ENCODE measurements at regions of chr3 and their contacts with region 1.

Region 1: DNA sequence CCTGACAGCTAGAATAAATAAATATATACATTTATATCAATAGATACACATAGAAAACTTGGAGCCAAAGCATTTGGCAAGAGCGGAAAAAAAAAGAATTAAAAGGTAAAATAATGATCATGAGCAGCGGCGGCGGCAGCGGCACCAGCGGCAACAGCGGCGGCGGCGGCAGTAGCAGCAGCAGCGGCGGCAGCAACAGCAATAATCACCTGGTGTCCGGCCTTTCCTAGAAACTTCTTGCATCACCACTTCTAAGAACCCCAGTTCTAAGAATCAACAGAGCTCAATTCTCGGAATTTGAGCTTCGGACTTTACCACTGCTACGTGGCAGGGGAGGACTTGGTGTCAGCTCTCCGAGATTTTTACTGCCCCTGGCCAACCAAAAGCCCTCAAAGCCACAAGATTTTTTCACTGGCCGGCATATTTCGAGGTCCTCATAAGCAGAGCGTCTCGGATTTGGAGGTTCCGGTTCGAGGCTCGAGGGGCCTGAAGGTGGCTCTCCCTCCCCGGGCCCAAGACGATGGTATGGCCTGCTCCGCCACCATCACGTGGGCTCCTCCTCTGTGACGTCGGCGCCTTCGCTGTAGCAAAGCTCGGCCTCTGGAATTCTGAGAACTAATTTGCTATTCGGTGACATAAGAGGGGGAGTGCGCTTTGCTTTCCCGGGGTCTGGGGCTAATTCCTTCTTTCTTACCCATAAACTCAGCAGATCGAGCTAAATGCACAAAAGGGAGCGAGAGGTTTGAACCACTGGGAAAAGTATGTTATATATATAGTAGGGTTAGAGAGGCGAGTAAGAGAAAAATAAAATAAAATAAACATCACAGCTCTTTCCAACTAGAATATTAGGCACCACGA is at the start of gene BCL6:
- DNase-seq: peak; percentile 92 to 99
- H3K4me3 ChIP-seq: peak within 1 kb of the TSS; percentile 88
- H3K27ac ChIP-seq: peak within 1 kb of the TSS; percentile 94
- H3K4me1 ChIP-seq: peaks cover 48% of the 10 kb centered on the region
- H3K27me3 ChIP-seq: no peaks in the 10 kb centered on the region
- CTCF ChIP-seq: 0 out of 2 replicates have a peak, but pooled peaks have one; percentile 19
- total RNA-seq, gene BCL6: 37.1 and 42.2 TPM in 2 replicates

Region 2: DNA sequence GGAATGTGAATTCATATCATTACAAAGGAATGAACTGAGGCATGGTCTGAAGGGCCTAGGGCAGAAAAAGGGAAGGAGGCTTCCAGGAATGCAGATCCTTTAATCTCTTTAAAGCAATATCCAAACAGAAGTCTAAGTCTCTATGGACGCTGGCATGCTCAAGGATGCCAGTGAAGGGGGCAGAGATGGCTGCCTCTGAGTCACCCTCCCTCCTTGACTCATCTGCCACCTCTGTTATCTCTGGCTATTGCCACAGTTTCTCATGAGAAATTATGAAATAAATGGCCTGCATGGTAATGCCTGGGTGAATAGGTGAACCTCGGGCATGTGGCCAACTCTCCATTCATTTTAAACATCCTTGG is 96.1 kb after region 1 on chr3:
- CTCF ChIA-PET with region 1: no interaction called
- POLR2A ChIA-PET with region 1: no interaction called
- intact Hi-C with region 1: loop called (anchors 1 kb)
- DNase-seq: peak; percentile 53 to 89
- H3K4me3 ChIP-seq: no peak overlapping the region
- H3K27ac ChIP-seq: peak overlapping the region; percentile 14
- H3K4me1 ChIP-seq: peaks cover 22% of the 10 kb centered on the region
- H3K27me3 ChIP-seq: no peaks in the 10 kb centered on the region
- CTCF ChIP-seq: no peak

Region 3: GRCh38 chr3:187986514-187986934 is 241.1 kb after region 1 on chr3:
- CTCF ChIA-PET with region 1: interaction called, 7 read pairs
- POLR2A ChIA-PET with region 1: interaction called, 3 read pairs
- intact Hi-C with region 1: loop called (anchors 1 kb)
- DNase-seq: peak; percentile 68 to 84
- H3K4me3 ChIP-seq: no peak overlapping the region
- H3K27ac ChIP-seq: peak overlapping the region; percentile 64
- H3K4me1 ChIP-seq: peaks cover 26% of the 10 kb centered on the region
- H3K27me3 ChIP-seq: no peaks in the 10 kb centered on the region
- CTCF ChIP-seq: no peak

Region 4: DNA sequence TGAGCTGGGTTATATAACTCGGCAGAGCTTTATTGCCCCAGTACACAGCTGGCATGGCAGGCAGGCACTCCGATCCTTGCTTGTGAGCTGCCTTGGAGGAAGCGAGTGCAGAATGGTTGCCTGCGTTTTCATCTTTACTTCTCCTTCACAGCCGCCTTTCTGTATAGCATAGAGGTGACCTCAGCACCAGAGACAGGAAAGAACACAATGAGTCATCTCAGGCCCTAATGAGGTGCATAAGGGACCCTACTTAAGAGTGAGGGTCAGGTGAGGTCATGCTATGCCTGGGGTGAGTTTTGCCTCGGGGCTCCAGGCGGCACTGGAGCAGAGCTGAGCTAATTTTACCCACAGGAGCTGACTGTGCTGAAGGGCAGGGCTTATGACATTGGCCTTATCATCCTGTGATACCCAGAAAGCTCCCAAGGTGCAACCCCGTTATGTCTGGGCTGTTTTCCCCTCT is 452.0 kb after region 1 on chr3:
- CTCF ChIA-PET with region 1: no interaction called
- POLR2A ChIA-PET with region 1: interaction called, 11 read pairs
- intact Hi-C with region 1: no loop called
- DNase-seq: peak; percentile 61 to 70
- H3K4me3 ChIP-seq: no peak overlapping the region
- H3K27ac ChIP-seq: no peak overlapping the region
- H3K4me1 ChIP-seq: peaks cover 24% of the 10 kb centered on the region
- H3K27me3 ChIP-seq: no peaks in the 10 kb centered on the region
- CTCF ChIP-seq: no peak

Region 5: GRCh38 chr3:188527389-188527788 is 782.0 kb after region 1 on chr3:
- CTCF ChIA-PET with region 1: no interaction called
- POLR2A ChIA-PET with region 1: interaction called, 36 read pairs
- intact Hi-C with region 1: no loop called
- DNase-seq: no peak
- H3K4me3 ChIP-seq: no peak overlapping the region
- H3K27ac ChIP-seq: no peak overlapping the region
- H3K4me1 ChIP-seq: peaks cover 5% of the 10 kb centered on the region; the same call in 1 of the 2 replicates
- H3K27me3 ChIP-seq: no peaks in the 10 kb centered on the region
- CTCF ChIP-seq: no peak

Region 6: DNA sequence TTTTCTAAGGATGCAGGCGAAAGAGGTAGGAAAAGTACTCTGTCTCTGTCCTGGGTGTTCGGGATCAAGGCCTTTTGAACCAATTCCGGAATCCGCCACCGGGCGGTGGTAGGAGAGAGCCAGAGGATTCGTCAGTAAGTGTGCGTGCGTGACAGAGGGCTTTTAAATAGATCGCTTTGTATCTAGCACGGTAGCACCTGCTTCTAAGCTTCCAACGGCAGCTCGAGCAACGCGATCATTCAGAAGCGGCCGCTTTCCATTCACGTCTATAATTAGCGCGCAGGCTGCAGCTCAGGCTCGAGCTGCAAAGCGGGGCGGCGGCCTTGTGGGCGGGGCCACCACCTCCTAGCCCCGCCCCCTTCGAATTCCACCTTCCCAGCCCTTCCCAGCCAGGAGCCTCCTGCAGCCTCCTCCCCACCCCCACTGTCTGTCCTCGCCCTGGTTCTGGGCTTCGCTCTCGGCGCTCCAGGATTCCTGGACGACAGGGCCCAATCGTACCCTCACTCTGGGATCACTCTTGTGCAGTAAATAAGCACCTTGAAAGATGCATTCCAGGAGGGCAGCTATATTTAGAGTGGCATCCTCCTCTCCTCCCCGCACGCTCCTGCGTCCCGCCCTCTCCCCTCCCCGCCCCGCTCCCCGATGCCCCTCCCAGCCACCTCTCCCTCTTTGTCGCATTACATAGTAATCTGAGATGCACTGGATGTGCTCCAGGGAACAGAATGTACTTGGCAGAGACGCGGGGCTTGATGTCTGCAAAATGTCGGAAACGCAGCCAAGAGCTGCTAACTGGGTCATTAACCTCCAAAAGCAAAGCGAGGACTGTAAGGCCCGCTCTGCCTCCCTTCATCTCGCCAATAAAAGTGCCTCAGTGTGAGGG is 1202.2 kb after region 1 on chr3:
- CTCF ChIA-PET with region 1: interaction called, 129 read pairs
- POLR2A ChIA-PET with region 1: interaction called, 8 read pairs
- intact Hi-C with region 1: loop called (anchors 1 kb)
- DNase-seq: peak; percentile 88 to 95
- H3K4me3 ChIP-seq: peak overlapping the region; percentile 57
- H3K27ac ChIP-seq: peak overlapping the region; percentile 7; the same call in 1 of the 2 replicates
- H3K4me1 ChIP-seq: peaks cover 39% of the 10 kb centered on the region
- H3K27me3 ChIP-seq: no peaks in the 10 kb centered on the region
- CTCF ChIP-seq: peak; percentile 66

Measured in PC-9 (cell line).